Activated CD8-positive, alpha-beta memory T cell treated with anti-CD3 and anti-CD28 coated beads, Interleukin-2, amount 10 ng/mL, durations not matched to agents 7 days and 5 days (primary cell): ENCODE measurements at regions of chr16 and their contacts with region 1.

Region 1: GRCh38 chr16:84617791-84618580 is at the start of gene COTL1:
- DNase-seq: peak; percentile 97
- ATAC-seq: peak; percentile 86
- H3K4me3 Mint-ChIP-seq: peak within 1 kb of the TSS; percentile 96
- H3K27ac Mint-ChIP-seq: peak within 1 kb of the TSS; percentile 87
- H3K4me1 Mint-ChIP-seq: peaks cover 41% of the 10 kb centered on the region
- H3K27me3 Mint-ChIP-seq: peaks cover 13% of the 10 kb centered on the region
- total RNA-seq, gene COTL1: 1,052 to 1,190 TPM

Region 2: GRCh38 chr16:84277237-84277823 is 340.7 kb before region 1 on chr16:
- CTCF ChIA-PET with region 1: interaction called, 16 read pairs
- DNase-seq: peak; percentile 73
- ATAC-seq: peak; percentile 84
- H3K4me3 Mint-ChIP-seq: no peak overlapping the region
- H3K27ac Mint-ChIP-seq: no peak overlapping the region
- H3K4me1 Mint-ChIP-seq: no peaks in the 10 kb centered on the region
- H3K27me3 Mint-ChIP-seq: peaks cover 10% of the 10 kb centered on the region

Region 3: DNA sequence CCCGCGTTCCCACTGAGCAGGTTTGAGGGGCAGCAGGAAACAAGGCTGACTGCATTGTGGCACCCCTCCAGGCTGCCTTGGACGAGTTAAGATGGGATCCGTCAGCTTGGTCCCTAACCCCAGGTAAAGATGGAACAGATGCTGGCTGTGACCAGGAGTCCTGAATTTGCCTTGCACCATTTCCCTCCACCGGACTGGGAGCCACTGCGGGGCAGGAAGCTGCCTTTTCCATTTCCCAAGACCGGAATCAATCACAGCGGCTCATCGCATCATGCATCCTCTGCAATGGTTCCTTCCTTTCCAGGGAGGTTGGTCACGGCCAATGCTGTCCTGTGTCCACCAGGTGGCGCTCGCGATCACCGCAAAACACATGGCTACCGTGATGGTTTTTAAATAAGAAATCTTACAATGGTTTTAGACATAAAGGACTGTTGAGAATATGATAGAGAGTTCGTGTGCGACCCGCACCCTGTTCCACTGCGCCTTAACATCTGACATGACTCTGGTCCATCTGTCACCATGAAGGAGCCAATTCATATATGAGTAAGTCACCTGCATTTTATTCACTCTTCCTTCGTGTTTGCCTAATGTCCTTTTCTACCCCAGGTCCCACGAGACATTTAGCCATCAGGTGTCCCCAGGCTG is 106.7 kb before region 1 on chr16:
- CTCF ChIA-PET with region 1: interaction called, 127 read pairs
- DNase-seq: peak; percentile 92
- ATAC-seq: peak; percentile 16
- H3K4me3 Mint-ChIP-seq: peak overlapping the region; percentile 39
- H3K27ac Mint-ChIP-seq: peak overlapping the region; percentile 87
- H3K4me1 Mint-ChIP-seq: peaks cover 86% of the 10 kb centered on the region
- H3K27me3 Mint-ChIP-seq: no peaks in the 10 kb centered on the region

Region 4: DNA sequence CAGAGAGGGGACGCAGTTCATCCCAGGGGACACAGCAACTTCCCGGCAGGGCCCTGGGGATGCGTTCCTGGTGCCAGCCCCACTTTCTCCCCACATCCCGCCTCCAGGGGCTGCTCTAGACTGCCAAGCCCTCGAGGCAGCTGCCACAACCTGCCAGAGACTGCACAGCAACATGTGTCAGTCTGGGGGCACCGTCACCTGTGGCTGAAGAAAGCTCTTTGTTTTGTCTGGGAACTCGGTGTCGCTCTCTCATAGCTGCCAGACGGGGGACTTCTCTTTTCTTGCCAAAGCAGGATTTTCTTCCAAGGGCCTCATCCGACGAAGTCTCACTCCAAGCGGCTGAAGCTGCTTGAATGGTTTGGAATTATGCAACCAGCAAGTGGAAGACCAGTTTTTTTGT is 43.8 kb before region 1 on chr16:
- CTCF ChIA-PET with region 1: no interaction called
- DNase-seq: no peak
- ATAC-seq: no peak
- H3K4me3 Mint-ChIP-seq: no peak overlapping the region
- H3K27ac Mint-ChIP-seq: peak overlapping the region; percentile 40
- H3K4me1 Mint-ChIP-seq: peaks cover 80% of the 10 kb centered on the region
- H3K27me3 Mint-ChIP-seq: no peaks in the 10 kb centered on the region

Region 5: DNA sequence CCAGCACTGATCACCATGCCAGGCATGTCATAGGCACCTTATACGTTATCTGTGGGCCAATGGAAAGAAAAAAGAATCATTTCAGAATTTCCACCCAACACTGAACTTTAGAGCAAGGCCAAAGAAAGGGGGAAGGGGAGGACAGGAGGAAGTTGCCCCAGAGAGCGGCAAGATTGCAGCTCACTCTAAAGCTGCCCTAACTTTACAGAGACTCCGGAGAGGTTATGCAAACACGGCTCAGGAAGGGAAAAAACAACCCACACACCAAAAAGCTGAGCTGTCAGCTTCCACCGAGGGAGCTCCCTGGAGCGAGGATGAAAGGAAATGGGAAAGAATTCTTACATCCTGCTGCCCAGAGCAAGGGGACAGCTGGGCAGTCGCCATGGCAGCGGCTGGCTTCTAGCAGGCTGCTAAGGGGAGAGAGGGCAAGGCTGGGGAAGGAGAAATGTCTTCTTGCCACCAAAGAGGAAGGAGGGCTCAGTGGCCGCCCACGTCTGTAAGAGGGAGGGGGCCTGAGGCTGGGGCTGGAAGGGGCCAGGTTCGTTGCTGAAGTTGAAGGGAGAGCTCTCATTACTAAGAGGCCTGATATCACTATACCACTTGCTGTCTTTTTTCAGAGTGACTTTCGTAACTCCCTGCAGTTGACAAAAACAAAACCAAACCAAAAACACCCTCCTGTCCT is 18.3 kb before region 1 on chr16:
- CTCF ChIA-PET with region 1: interaction called, 88 read pairs
- DNase-seq: peak; percentile 83
- ATAC-seq: peak; percentile 21
- H3K4me3 Mint-ChIP-seq: peak overlapping the region; percentile 77
- H3K27ac Mint-ChIP-seq: peak overlapping the region; percentile 97
- H3K4me1 Mint-ChIP-seq: peaks cover 87% of the 10 kb centered on the region
- H3K27me3 Mint-ChIP-seq: no peaks in the 10 kb centered on the region

Region 6: DNA sequence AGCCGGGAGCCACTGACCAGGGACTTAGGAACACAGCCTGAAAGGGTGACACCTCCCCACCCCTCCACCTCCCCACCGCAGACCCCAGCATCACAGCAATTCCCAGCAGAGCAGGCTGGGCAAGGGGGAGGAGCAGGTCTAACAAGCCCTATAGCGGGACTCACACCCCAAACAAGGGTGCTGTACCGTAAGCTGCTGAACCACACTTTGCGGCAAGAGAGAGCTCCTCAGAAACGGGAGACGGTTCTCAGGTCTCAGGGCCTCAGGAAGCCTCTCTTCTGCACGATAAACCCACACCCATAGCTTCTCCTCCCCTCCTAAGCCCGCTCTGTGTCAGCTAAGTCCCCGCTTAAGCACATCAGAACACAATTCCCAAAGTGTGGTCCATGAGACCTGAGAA is 11.6 kb after region 1 on chr16:
- CTCF ChIA-PET with region 1: no interaction called
- DNase-seq: no peak
- ATAC-seq: no peak
- H3K4me3 Mint-ChIP-seq: no peak overlapping the region
- H3K27ac Mint-ChIP-seq: no peak overlapping the region
- H3K4me1 Mint-ChIP-seq: peaks cover 22% of the 10 kb centered on the region
- H3K27me3 Mint-ChIP-seq: peaks cover 51% of the 10 kb centered on the region

Region 7: GRCh38 chr16:84647828-84648594 is 30.0 kb after region 1 on chr16 and contains the start of gene KLHL36:
- CTCF ChIA-PET with region 1: interaction called, 16 read pairs
- DNase-seq: peak; percentile 71
- ATAC-seq: peak; percentile 93
- H3K4me3 Mint-ChIP-seq: peak within 1 kb of the TSS; percentile 73
- H3K27ac Mint-ChIP-seq: peak within 1 kb of the TSS; percentile 65
- H3K4me1 Mint-ChIP-seq: peaks cover 35% of the 10 kb centered on the region
- H3K27me3 Mint-ChIP-seq: peaks cover 26% of the 10 kb centered on the region
- total RNA-seq, gene KLHL36: 38.5 to 44.9 TPM